PC-9 (cell line): ENCODE measurements at regions of chr4 and their contacts with region 1.

Region 1: DNA sequence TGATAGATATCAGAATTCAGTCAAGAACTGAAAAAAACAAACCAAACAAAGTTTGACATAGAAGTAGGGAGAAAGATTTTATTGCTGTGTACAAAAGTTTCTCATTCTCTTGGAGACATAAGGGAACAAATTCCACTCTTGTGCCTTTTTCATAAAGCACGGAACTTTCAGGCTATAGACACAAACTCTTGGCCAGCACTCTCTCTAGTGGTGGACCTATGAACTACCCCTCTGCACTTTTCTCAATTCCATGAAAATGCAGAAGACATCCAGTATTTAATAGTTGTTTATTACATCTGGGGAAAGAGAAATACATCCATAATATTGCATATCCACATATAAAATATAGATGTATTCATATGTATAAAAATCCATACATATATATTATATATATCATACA is 291.6 kb upstream of the HS3ST1 start:
- DNase-seq: peak in 1 of 2 experiments; percentile 46
- H3K4me3 ChIP-seq: no peak overlapping the region
- H3K27ac ChIP-seq: peak overlapping the region; percentile 41; the same call in 1 of the 2 replicates
- H3K4me1 ChIP-seq: peaks cover 5% of the 10 kb centered on the region
- H3K27me3 ChIP-seq: no peaks in the 10 kb centered on the region
- CTCF ChIP-seq: peak; percentile 76

Region 2: GRCh38 chr4:10582059-10582686 is 1138.1 kb before region 1 on chr4:
- CTCF ChIA-PET with region 1: no interaction called
- POLR2A ChIA-PET with region 1: no interaction called
- intact Hi-C with region 1: loop called (anchors 5 kb)
- DNase-seq: peak in 1 of 2 experiments; percentile 37
- H3K4me3 ChIP-seq: no peak overlapping the region
- H3K27ac ChIP-seq: no peak overlapping the region
- H3K4me1 ChIP-seq: no peaks in the 10 kb centered on the region
- H3K27me3 ChIP-seq: no peaks in the 10 kb centered on the region
- CTCF ChIP-seq: peak; percentile 85

Region 3: DNA sequence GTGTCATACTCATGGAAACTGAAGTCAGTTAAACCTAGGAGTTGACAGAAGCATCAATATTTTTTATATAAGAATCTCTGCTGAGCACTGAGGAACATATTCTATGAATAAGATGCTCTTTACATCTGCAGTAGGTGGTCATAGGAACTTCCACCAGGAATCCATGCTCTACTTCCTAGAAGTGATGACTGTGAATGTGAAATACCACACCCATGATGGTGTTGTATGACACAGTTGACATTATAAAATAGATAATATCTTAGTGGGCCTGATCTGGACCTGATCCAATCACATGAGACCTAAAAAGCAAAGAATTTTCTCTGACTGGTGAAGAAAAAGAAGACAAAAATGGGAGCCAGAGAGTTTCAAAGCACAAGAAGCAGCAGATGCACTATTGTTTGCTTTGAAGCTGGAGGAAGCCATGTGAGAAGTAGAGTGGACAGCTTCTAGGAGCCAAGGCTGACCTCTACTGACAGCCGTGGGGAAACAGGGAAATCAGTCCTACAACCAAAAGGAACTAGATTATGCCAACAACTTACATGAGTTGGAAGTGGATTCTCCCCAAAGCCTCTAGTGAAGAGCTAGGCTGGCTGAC is 223.0 kb before region 1 on chr4:
- CTCF ChIA-PET with region 1: no interaction called
- POLR2A ChIA-PET with region 1: no interaction called
- intact Hi-C with region 1: loop called (anchors 5 kb)
- DNase-seq: no peak
- H3K4me3 ChIP-seq: no peak overlapping the region
- H3K27ac ChIP-seq: peak overlapping the region; percentile 87
- H3K4me1 ChIP-seq: peaks cover 7% of the 10 kb centered on the region; the same call in 1 of the 2 replicates
- H3K27me3 ChIP-seq: no peaks in the 10 kb centered on the region
- CTCF ChIP-seq: 0 out of 2 replicates have a peak, but pooled peaks have one; percentile 34

Region 4: DNA sequence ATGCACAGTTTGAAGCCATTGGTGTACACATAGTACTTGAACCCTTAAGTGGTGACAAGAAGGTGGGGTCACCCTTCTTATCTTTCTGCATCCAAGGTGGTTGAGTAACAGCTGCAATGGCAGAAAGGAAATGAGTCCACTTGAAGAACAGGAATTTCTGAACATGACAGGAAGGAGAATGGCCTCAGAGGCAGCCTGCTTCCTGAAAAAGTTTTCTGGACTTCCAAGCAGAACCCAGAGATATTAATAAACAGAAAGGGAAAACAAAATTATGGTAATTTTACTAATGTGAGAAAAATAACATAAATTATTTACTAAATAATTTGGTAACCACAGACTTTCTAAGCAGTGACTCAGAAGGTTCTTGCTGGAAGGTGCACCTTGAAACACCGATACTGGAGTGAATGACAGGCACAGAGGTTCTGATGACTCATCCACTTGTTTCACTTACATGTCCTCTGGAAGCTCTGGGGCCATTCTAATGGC is 171.7 kb before region 1 on chr4:
- CTCF ChIA-PET with region 1: no interaction called
- POLR2A ChIA-PET with region 1: no interaction called
- intact Hi-C with region 1: loop called (anchors 1 kb)
- DNase-seq: peak; percentile 29 to 77
- H3K4me3 ChIP-seq: 0 out of 2 replicates have a peak overlapping the region, but pooled peaks have one; percentile 10
- H3K27ac ChIP-seq: peak overlapping the region; percentile 93
- H3K4me1 ChIP-seq: peaks cover 29% of the 10 kb centered on the region
- H3K27me3 ChIP-seq: no peaks in the 10 kb centered on the region
- CTCF ChIP-seq: no peak

Region 5: GRCh38 chr4:11623726-11624037 is 96.6 kb before region 1 on chr4:
- CTCF ChIA-PET with region 1: no interaction called
- POLR2A ChIA-PET with region 1: no interaction called
- intact Hi-C with region 1: loop called (anchors 5 kb)
- DNase-seq: no peak
- H3K4me3 ChIP-seq: no peak overlapping the region
- H3K27ac ChIP-seq: peak overlapping the region; percentile 94; the same call in 1 of the 2 replicates
- H3K4me1 ChIP-seq: peaks cover 65% of the 10 kb centered on the region
- H3K27me3 ChIP-seq: no peaks in the 10 kb centered on the region
- CTCF ChIP-seq: peak; percentile 24; the same call in 1 of the 2 replicates

Region 6: GRCh38 chr4:11732155-11732554 is 11.9 kb after region 1 on chr4:
- CTCF ChIA-PET with region 1: no interaction called
- POLR2A ChIA-PET with region 1: no interaction called
- intact Hi-C with region 1: no loop called
- DNase-seq: peak in 1 of 2 experiments; percentile 38
- H3K4me3 ChIP-seq: no peak overlapping the region
- H3K27ac ChIP-seq: no peak overlapping the region
- H3K4me1 ChIP-seq: 0 out of 2 replicates have a peak, but pooled peaks cover 5% of the 10 kb centered on the region
- H3K27me3 ChIP-seq: no peaks in the 10 kb centered on the region
- CTCF ChIP-seq: no peak